GM12878 (cell line): ENCODE measurements at regions of chr19 and their contacts with region 1.

Region 1: DNA sequence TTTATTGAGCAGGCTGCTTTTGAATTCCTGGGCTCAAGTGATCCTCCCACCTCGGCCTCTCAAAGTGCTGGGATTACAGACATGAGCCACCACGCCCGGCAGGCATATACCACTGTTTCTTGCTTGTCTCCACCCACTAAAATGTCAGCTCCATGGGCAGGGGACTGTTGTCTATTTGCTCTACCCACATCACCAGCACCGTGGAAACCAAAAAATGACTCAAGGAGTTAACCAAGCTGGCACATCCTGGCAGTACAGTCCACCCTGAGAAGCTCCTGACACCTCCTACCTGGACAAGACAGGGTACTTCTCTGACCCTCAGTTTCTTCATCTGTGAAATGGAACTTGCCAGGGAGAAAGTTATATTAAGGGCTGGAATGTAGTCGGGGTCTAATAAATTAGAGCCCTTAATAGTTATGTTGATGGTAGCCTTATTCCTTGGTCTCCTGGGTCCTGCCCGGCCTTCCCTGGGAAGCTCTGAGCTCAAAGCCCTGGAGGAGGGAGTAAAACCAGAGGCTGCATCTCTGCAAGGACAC is 13.9 kb downstream of the RDH8 start:
- DNase-seq: no peak
- ATAC-seq: no peak
- H3K4me3 ChIP-seq: no peak overlapping the region
- H3K27ac ChIP-seq: no peak overlapping the region
- H3K4me1 ChIP-seq: no peaks in the 10 kb centered on the region
- H3K27me3 ChIP-seq: peaks cover 0 to 2% of the 10 kb centered on the region in 2 experiments; a peak in 2 of 4 replicates
- CTCF ChIP-seq: no peak
- EP300 ChIP-seq: no peak
- POLR2A ChIP-seq: no peak
- RAD21 ChIP-seq: no peak

Region 2: GRCh38 chr19:9857920-9858746 is 169.1 kb before region 1 on chr19:
- CTCF ChIA-PET with region 1: no interaction called
- POLR2A ChIA-PET with region 1: no interaction called
- RAD21 ChIA-PET with region 1: no interaction called
- SMC1A ChIA-PET with region 1: no interaction called
- in situ Hi-C with region 1: no loop called
- intact Hi-C with region 1: no loop called
- DNase-seq: no peak
- ATAC-seq: no peak
- H3K4me3 ChIP-seq: no peak overlapping the region
- H3K27ac ChIP-seq: no peak overlapping the region
- H3K4me1 ChIP-seq: peaks cover 16% of the 10 kb centered on the region
- H3K27me3 ChIP-seq: no peaks in the 10 kb centered on the region
- CTCF ChIP-seq: no peak
- EP300 ChIP-seq: no peak
- POLR2A ChIP-seq: no peak
- RAD21 ChIP-seq: no peak

Region 3: DNA sequence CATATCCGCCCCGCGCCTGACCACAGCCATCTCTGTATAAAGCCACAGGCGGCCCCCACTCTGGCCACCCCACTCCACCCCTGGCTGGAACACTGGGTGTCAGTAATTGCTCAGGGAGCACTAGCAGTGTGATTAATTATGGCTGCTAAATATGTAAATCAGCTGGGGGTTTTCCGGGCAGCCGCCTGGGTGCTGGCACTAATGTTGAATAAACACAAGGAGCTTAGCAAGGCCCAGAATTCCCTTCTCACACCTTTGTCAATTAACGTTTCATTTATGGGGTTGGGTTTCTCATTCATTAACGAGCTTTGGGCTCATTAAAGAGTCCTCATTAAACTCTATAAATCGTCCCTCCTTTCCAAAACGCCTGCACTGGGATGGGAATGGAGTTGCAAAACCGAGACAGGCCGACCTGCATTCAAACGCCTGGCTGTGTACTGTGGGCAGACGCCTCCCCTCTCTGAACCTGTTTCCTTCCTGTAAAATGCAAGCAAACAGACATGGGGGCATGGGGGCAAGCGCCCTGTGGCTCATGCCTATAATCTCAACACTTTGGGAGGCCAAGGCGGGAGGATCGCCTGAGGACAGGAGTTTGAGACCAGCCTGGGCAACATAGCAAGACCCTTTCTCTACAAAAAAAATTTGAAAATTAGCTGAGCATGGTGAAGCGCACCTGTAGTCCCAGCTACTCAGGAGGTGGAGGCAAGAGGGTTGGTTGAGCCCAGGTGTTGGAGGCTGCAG is 73.3 kb before region 1 on chr19:
- CTCF ChIA-PET with region 1: interaction called, 12 read pairs
- POLR2A ChIA-PET with region 1: no interaction called
- RAD21 ChIA-PET with region 1: no interaction called
- SMC1A ChIA-PET with region 1: interaction called, 5 read pairs
- in situ Hi-C with region 1: no loop called
- intact Hi-C with region 1: no loop called
- DNase-seq: no peak
- ATAC-seq: no peak; the same call in 1 of the 3 replicates
- H3K4me3 ChIP-seq: no peak overlapping the region
- H3K27ac ChIP-seq: no peak overlapping the region
- H3K4me1 ChIP-seq: no peaks in the 10 kb centered on the region
- H3K27me3 ChIP-seq: no peaks in the 10 kb centered on the region; a peak in 1 of 4 replicates
- CTCF ChIP-seq: 0 out of 6 replicates have a peak, but pooled peaks of 1 of the 3 experiments have one; percentile 3
- EP300 ChIP-seq: no peak
- POLR2A ChIP-seq: no peak
- RAD21 ChIP-seq: no peak

Region 4: GRCh38 chr19:10000171-10000826 is 26.9 kb before region 1 on chr19:
- CTCF ChIA-PET with region 1: interaction called, 36 read pairs
- POLR2A ChIA-PET with region 1: no interaction called
- RAD21 ChIA-PET with region 1: interaction called, 19 read pairs
- SMC1A ChIA-PET with region 1: interaction called, 8 read pairs
- in situ Hi-C with region 1: no loop called
- intact Hi-C with region 1: no loop called
- DNase-seq: no peak
- ATAC-seq: peak; percentile 42; the same call in 2 of the 3 replicates
- H3K4me3 ChIP-seq: no peak overlapping the region
- H3K27ac ChIP-seq: no peak overlapping the region
- H3K4me1 ChIP-seq: peaks cover under 1% of the 10 kb centered on the region; the same call in 1 of the 2 replicates
- H3K27me3 ChIP-seq: no peaks in the 10 kb centered on the region
- CTCF ChIP-seq: peak; percentile 70 to 87 (median 77)
- EP300 ChIP-seq: no peak
- POLR2A ChIP-seq: no peak
- RAD21 ChIP-seq: peak; percentile 73

Region 5: DNA sequence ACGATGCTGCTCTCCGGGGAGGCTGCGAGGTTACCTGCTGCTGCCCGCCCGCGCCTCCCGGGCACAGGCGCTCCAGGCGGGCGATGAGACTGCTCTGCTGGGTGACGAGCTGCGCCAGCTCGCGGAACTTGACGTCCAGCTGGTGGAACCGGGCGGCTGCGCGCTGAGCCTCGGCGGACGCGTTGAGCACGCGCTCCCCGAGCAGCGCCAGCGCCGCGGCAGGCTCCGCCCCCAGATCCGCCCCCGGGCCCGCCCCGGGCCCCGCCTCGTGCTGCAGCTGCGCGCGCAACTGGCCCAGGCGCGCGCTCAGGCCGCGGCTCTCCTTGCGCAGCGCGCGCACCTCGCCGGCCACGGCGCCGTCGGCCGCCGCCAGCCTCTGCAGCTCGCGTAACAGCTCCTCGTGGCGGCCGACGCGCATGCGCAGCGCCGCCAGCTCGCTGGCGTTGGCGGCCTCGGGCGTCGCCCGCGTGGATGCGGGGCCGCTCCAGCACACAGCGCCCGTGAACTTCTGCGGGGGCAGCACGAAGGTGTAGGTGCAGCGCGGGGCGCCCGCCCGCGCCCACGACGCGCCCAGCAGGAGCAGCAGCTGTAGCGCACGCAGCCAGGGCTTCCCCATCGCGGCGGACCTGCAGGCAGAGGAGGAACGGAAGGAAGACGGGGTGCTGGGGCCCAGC is 68.9 kb after region 1 on chr19:
- CTCF ChIA-PET with region 1: interaction called, 12 read pairs
- POLR2A ChIA-PET with region 1: interaction called, 3 read pairs
- RAD21 ChIA-PET with region 1: interaction called, 4 read pairs
- SMC1A ChIA-PET with region 1: interaction called, 5 read pairs
- in situ Hi-C with region 1: no loop called
- intact Hi-C with region 1: no loop called
- DNase-seq: no peak
- ATAC-seq: peak; percentile 81
- H3K4me3 ChIP-seq: peak overlapping the region; percentile 21; the same call in 1 of the 2 replicates
- H3K27ac ChIP-seq: peak overlapping the region; percentile 70
- H3K4me1 ChIP-seq: peaks cover 35% of the 10 kb centered on the region
- H3K27me3 ChIP-seq: no peaks in the 10 kb centered on the region
- CTCF ChIP-seq: no peak
- EP300 ChIP-seq: no peak
- POLR2A ChIP-seq: peak; percentile 81
- RAD21 ChIP-seq: no peak

Region 6: DNA sequence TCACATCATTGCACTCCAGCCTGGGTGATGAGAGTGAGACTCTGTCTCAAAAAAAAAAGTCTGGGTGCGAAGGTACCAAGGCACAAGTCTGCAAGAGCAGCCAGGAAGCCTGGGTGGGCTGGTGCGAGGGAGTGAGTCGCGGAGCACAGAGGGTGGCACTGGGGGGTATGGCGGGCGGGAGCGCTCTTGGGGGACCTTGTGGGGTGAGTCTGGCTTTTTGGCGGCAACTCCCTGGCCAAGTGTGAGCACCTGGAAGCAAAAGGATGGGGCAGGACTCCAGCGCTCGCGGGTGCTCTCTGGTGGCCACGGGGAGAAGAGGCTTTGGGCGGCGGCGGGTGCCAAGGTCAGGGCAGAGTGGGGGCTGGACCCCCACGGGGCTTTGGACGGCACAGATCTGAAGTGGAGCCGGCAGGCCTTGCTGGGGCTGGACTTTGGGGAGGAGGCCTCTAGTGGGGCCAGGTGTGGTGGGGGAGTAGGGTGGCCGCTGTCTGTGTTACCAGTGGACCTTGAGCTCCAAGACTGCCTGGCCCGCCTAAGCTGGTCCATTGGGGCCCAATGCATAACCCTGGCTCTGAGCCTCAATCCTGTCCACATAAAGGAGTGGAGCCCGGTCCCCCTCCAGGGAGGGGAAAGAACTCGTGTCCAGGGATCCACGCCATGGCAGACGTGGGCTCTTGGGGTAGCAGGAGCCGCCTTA is 85.8 kb after region 1 on chr19:
- CTCF ChIA-PET with region 1: interaction called, 25 read pairs
- POLR2A ChIA-PET with region 1: no interaction called
- RAD21 ChIA-PET with region 1: interaction called, 7 read pairs
- SMC1A ChIA-PET with region 1: interaction called, 8 read pairs
- in situ Hi-C with region 1: no loop called
- intact Hi-C with region 1: loop called (anchors 5 kb)
- DNase-seq: no peak
- ATAC-seq: peak; percentile 72
- H3K4me3 ChIP-seq: peak overlapping the region; percentile 51; the same call in 1 of the 2 replicates
- H3K27ac ChIP-seq: peak overlapping the region; percentile 62
- H3K4me1 ChIP-seq: peaks cover 40% of the 10 kb centered on the region
- H3K27me3 ChIP-seq: no peaks in the 10 kb centered on the region
- CTCF ChIP-seq: peak; percentile 67 to 96 (median 79)
- EP300 ChIP-seq: no peak
- POLR2A ChIP-seq: no peak; the same call in 1 of the 2 replicates
- RAD21 ChIP-seq: peak; percentile 81